Activated T-helper 1 cell treated with anti-CD3 and anti-CD28 coated beads, Interleukin-12 subunit alpha, Interleukin-12 subunit beta, Interleukin-2, Interleukin-4 antibody, amounts not matched to agents 30 ng/mL and 10 ng/mL and 1 ng/mL, durations not matched to agents 14 hours and 24 hours and 36 hours (primary cell): ENCODE measurements at regions of chr10 and their contacts with region 1.

Region 1: DNA sequence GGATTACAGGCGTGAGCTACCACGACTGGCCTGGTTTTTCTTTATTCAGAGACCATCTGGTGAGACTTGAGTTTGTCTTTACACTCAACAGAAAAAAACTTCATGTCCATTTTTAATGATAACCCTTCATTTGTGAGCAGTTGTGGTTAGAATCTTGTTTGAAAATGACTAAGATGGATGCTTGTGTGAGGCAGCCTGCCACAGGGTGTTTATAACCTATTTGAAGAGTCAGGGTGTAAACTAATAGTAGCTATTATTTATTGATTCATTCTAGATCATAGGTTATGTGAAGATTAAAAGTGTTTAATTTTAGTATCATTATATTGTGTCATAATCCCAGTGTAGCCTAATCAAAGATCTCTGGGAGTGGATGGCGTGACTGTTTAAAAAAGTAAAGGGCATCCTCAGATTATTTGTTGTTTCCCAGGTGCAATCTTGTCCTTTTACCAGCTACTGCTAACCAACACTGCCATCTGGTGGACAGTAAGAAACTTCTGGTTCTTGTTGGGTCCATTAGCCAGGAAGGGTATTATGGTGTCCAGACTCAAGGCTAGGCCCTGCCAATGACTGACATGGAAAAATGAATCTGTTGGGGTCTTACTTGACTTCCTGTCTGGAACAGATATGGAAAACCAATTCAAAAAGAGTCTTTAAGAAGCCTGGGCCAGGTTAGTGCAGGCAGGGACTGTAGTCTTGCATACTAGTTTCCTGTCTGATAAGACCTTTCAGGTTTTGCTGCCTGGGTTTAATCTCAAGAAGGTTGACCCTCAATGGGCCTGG is 24.9 kb downstream of the NRBF2 start:
- DNase-seq: peak; percentile 29
- H3K4me3 Mint-ChIP-seq: no peak overlapping the region
- H3K27ac Mint-ChIP-seq: no peak overlapping the region
- H3K4me1 Mint-ChIP-seq: peaks cover 24% of the 10 kb centered on the region
- H3K27me3 Mint-ChIP-seq: no peaks in the 10 kb centered on the region

Region 2: GRCh38 chr10:62437696-62438095 is 720.3 kb before region 1 on chr10:
- intact Hi-C with region 1: loop called (anchors 1 kb)
- DNase-seq: no peak
- H3K4me3 Mint-ChIP-seq: no peak overlapping the region
- H3K27ac Mint-ChIP-seq: no peak overlapping the region
- H3K4me1 Mint-ChIP-seq: peaks cover 12% of the 10 kb centered on the region
- H3K27me3 Mint-ChIP-seq: peaks cover 15% of the 10 kb centered on the region

Region 3: DNA sequence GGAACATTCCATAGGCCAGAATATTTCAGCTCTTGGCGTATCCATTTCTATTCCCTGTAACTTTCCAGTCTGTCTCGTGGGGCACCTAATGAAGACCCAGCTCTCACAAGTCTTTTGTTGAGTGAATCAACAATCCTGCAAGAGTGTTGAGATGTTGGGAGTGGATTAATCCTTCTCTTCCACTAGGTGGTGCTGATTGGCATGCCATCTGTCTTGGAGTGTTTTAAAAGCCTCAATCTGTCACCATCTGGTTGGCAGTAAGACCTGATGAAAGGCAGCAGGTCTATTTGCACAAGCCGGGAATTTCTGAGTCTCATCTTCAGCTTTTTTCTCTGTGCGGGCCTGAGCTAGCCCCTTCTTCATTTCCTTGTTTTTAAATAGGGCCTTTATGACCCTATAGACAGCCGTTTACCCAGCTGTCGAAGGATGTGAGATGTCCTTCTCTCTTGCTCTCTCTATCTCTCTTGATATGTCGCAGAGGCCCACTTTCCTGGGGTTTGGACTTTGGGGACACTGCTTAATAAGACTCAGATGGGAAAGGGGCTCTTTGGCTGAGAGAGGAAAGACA is 603.3 kb before region 1 on chr10:
- intact Hi-C with region 1: loop called (anchors 1 kb)
- DNase-seq: no peak
- H3K4me3 Mint-ChIP-seq: no peak overlapping the region
- H3K27ac Mint-ChIP-seq: no peak overlapping the region
- H3K4me1 Mint-ChIP-seq: no peaks in the 10 kb centered on the region
- H3K27me3 Mint-ChIP-seq: peaks cover 24% of the 10 kb centered on the region

Region 4: GRCh38 chr10:62610649-62611229 is 547.3 kb before region 1 on chr10:
- intact Hi-C with region 1: loop called (anchors 1 kb)
- DNase-seq: peak; percentile 65
- H3K4me3 Mint-ChIP-seq: no peak overlapping the region
- H3K27ac Mint-ChIP-seq: peak overlapping the region; percentile 11
- H3K4me1 Mint-ChIP-seq: peaks cover 59% of the 10 kb centered on the region
- H3K27me3 Mint-ChIP-seq: peaks cover 9% of the 10 kb centered on the region

Region 5: GRCh38 chr10:63083904-63084689 is 73.9 kb before region 1 on chr10:
- intact Hi-C with region 1: loop called (anchors 1 kb)
- DNase-seq: peak; percentile 14
- H3K4me3 Mint-ChIP-seq: no peak overlapping the region
- H3K27ac Mint-ChIP-seq: no peak overlapping the region
- H3K4me1 Mint-ChIP-seq: peaks cover 12% of the 10 kb centered on the region
- H3K27me3 Mint-ChIP-seq: peaks cover 28% of the 10 kb centered on the region

Region 6: GRCh38 chr10:63603709-63604445 is 445.8 kb after region 1 on chr10:
- intact Hi-C with region 1: no loop called
- DNase-seq: no peak
- H3K4me3 Mint-ChIP-seq: no peak overlapping the region
- H3K27ac Mint-ChIP-seq: no peak overlapping the region
- H3K4me1 Mint-ChIP-seq: peaks cover 7% of the 10 kb centered on the region
- H3K27me3 Mint-ChIP-seq: no peaks in the 10 kb centered on the region